ENCODE measurements at regions of chr9 and their contacts with region 1.

Region 1: GRCh38 chr9:90053027-90053426 is 448.2 kb downstream of the GADD45G start:
- DNase-seq: peak in 1 of 2 experiments; percentile 77
- H3K4me3 ChIP-seq: no peak overlapping the region
- H3K27ac ChIP-seq: no peak overlapping the region
- H3K4me1 ChIP-seq: no peaks in the 10 kb centered on the region
- H3K27me3 ChIP-seq: no peaks in the 10 kb centered on the region
- CTCF ChIP-seq: peak; percentile 51 to 79 (median 74)
- EP300 ChIP-seq: no peak
- POLR2A ChIP-seq: no peak
- RAD21 ChIP-seq: peak; percentile 45 to 63

Region 2: DNA sequence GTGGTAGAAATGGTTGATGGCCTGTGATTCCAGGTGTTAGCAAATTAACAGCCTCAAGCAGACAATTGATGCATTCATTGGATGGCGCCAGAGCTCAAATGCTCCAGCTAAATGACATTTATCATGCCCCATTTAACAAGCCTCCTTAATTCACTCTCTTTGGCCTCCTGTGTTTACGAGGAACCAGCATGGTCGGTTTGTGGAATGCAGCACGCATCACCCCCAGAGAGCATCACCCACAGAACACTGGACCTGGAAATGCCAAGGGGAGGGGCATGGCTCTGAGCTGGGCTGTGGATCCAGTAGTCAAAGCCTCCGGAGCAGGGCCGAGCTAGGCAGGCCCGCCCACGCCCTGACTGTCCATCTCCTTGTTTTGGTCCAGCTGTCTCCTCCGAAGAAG is 14.3 kb before region 1 on chr9:
- CTCF ChIA-PET with region 1: interaction called, 17 read pairs
- POLR2A ChIA-PET with region 1: no interaction called
- DNase-seq: peak in 1 of 2 experiments; percentile 41
- H3K4me3 ChIP-seq: no peak overlapping the region
- H3K27ac ChIP-seq: no peak overlapping the region
- H3K4me1 ChIP-seq: peaks cover 2 to 8% (median 6%) of the 10 kb centered on the region in 4 experiments; a peak in 6 of 7 replicates
- H3K27me3 ChIP-seq: no peaks in the 10 kb centered on the region
- CTCF ChIP-seq: no peak
- EP300 ChIP-seq: no peak
- POLR2A ChIP-seq: no peak
- RAD21 ChIP-seq: no peak

Region 3: DNA sequence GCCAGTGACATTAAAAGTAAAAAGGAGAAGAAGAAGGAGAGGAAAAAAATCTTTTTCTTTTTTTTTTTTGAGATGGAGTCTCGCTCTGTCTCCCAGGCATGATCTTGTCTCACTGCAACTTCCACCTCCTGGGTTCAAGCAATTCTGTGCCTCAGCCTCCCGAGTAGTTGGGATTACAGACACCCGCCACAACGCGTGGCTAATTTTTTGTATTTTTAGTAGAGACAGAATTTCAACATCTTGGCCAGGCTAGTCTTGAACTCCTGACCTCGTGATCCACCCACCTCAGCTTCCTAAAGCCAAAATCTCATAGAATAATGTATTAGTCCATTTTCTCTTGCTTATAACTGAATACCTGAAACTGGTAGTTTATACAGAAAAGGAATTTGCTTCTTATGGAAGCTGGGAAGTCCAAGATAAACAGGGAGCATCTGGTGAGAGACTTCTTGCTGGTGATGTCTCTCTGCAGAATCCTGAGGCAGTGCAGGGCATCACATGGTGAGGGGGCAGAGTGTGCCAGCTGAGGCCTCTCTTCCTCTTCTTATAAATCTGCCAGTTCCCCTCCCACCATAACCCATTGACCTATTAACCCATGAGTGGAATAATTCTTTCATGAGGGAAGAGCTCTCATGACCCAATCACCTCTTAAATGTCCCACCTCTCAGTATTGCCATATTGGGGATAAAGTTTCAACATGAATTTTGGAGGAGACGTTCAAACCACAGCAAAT is 18.1 kb after region 1 on chr9:
- CTCF ChIA-PET with region 1: interaction called, 15 read pairs
- POLR2A ChIA-PET with region 1: no interaction called
- DNase-seq: no peak
- H3K4me3 ChIP-seq: no peak overlapping the region
- H3K27ac ChIP-seq: no peak overlapping the region
- H3K4me1 ChIP-seq: no peaks in the 10 kb centered on the region
- H3K27me3 ChIP-seq: no peaks in the 10 kb centered on the region; a peak in 1 of 7 replicates
- CTCF ChIP-seq: no peak
- EP300 ChIP-seq: no peak
- POLR2A ChIP-seq: no peak
- RAD21 ChIP-seq: no peak

Region 4: DNA sequence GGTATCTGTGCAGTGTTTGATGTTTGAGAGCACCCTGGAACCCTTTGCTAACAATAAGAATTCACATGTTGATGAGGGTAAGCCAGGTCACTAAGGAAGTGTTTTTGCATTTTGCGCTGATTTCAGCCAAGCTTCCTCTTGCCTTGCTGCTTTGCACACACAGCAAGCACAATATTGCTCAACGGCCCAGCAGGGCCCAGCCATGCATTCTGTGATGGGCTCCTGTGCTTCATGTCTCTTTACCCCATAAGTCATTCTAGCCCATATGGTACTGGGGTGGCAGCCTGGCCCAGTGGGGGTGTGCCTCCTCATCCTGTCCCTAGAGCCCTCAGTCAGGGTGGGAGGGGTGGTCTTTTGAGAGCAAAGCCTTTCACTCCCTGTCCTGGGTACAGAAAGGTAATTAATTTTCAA is 33.1 kb after region 1 on chr9:
- CTCF ChIA-PET with region 1: no interaction called
- POLR2A ChIA-PET with region 1: no interaction called
- DNase-seq: no peak
- H3K4me3 ChIP-seq: no peak overlapping the region
- H3K27ac ChIP-seq: no peak overlapping the region
- H3K4me1 ChIP-seq: peaks cover 2 to 7% (median 3%) of the 10 kb centered on the region in 4 experiments
- H3K27me3 ChIP-seq: no peaks in the 10 kb centered on the region
- CTCF ChIP-seq: no peak
- EP300 ChIP-seq: no peak
- POLR2A ChIP-seq: no peak
- RAD21 ChIP-seq: no peak